Posterior cingulate gyrus (tissue), 11 donors: ENCODE measurements at regions of chr9 and their contacts with region 1.

Region 1: GRCh38 chr9:100222674-100223073 is 123.6 kb downstream of the INVS start:
- DNase-seq: no peak

Region 2: DNA sequence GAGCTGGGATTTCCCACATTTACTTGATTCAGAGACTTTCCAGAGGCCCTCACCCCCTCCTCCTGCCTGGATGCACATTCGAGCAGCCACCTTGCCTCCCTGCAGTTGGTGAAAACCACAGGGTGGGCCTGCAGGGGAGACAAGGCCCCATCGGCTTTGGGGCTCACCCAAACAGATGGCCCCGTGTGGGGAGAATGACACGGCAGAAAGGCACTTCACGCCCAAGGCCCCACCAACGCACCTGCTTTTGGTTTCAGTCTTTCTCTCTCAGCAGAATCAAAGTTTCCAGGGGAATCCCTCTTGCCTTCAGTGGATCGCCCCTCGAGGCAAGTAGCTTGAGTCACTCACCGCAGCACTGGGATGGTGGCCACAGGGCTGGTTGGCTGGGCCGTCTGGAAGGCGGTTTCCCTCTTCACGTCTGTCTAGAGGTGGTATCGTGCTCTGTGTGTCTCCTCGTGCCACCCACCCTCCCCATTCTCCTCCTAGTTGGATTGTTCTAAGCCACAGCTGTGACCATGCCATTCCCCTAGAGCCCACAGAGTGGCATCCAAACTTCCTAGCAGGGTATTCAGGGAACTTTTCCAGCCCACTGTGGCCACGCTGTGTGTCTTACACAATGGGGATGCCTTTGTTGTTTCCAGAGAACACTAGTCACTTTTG is 968.8 kb before region 1 on chr9:
- intact Hi-C with region 1: no loop called
- DNase-seq: peak in 5 of 10 donors; percentile 17 to 84 (median 44)

Region 3: GRCh38 chr9:99266255-99267023 is 956.2 kb before region 1 on chr9:
- intact Hi-C with region 1: loop called (anchors 10 kb)
- DNase-seq: peak; percentile 58 to 97 (median 79)